Activated CD4-positive, alpha-beta memory T cell treated with anti-CD3 and anti-CD28 coated beads, Interleukin-2, amount 10 ng/mL, durations not matched to agents 7 days and 5 days (primary cell): ENCODE measurements at regions of chr16 and their contacts with region 1.

Region 1: DNA sequence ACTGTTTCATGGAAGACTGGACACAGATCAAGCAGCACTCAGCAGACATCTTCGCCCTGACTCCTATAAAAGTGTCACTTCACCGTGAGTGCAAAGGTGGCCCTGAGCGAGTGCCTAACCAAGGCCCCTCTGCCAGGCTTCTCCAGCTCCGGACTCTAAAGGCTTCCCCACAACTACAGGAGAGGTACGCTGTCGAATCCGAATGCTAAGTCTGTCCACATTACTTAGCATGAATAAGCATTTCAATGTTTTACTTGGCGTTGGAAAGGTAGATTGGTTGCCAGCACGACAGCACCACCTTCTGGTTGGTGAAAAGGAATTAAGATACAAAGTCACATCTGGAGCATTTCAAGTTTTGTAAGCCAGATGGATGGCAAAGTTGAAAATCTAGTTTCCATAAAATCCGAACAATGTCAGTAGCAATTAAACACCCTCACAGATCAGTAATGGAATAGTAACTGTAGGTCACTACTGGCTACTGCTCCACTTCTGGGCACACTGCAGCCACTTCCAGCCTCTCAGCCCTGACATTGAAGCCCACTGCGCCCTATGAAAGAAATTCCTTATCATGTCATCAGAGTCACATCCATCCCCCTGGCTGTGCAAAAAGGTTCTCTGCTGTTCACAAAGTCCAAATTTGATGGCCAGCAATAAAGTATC is 100.9 kb downstream of the PARN start:
- DNase-seq: peak; percentile 54
- H3K4me3 Mint-ChIP-seq: no peak overlapping the region
- H3K27ac Mint-ChIP-seq: no peak overlapping the region
- H3K4me1 Mint-ChIP-seq: no peaks in the 10 kb centered on the region
- H3K27me3 Mint-ChIP-seq: no peaks in the 10 kb centered on the region

Region 2: DNA sequence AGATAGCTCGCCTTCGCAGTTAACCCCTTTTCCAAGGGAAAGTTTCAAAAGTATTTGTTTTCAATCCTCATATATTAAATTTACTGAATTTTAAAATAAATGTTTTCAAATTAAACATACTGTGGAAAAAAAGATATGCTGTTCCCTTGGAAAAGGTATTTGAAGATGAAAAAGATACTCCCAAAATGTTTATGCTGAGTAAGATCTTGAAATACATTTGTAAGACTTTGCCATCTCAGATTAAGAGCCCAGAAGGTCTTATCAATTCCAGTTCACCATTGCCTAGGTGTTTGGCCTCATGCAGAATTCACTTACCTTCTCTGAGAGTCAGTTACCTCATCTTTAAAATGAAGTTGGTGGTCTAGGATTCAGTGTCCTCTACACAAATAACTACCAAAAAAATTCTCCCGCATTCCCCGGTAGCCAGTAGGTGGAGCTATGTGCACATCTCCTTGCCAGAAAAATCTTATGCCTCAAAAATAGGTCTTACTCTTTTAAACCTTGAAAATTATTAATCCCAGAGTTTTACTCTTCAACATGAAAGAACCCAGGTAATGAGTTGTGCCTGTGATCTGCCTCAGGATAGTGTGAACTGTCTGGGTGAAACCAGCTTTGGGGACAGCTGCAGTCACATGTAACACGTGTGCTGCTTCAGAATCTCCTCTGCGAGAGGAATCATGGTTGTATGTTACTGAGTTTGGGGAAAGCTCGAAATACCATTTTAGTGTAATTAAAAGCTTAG is 279.7 kb before region 1 on chr16:
- CTCF ChIA-PET with region 1: interaction called, 13 read pairs
- POLR2A ChIA-PET with region 1: no interaction called
- DNase-seq: peak; percentile 54
- H3K4me3 Mint-ChIP-seq: no peak overlapping the region
- H3K27ac Mint-ChIP-seq: no peak overlapping the region
- H3K4me1 Mint-ChIP-seq: no peaks in the 10 kb centered on the region
- H3K27me3 Mint-ChIP-seq: no peaks in the 10 kb centered on the region

Region 3: GRCh38 chr16:14268073-14268472 is 261.1 kb before region 1 on chr16:
- CTCF ChIA-PET with region 1: no interaction called
- POLR2A ChIA-PET with region 1: no interaction called
- DNase-seq: no peak
- H3K4me3 Mint-ChIP-seq: no peak overlapping the region
- H3K27ac Mint-ChIP-seq: no peak overlapping the region
- H3K4me1 Mint-ChIP-seq: no peaks in the 10 kb centered on the region
- H3K27me3 Mint-ChIP-seq: no peaks in the 10 kb centered on the region

Region 4: GRCh38 chr16:14569193-14569592 is 40.1 kb after region 1 on chr16:
- CTCF ChIA-PET with region 1: no interaction called
- POLR2A ChIA-PET with region 1: no interaction called
- DNase-seq: no peak
- H3K4me3 Mint-ChIP-seq: no peak overlapping the region
- H3K27ac Mint-ChIP-seq: no peak overlapping the region
- H3K4me1 Mint-ChIP-seq: peaks cover 12% of the 10 kb centered on the region
- H3K27me3 Mint-ChIP-seq: no peaks in the 10 kb centered on the region